Activated T-helper 1 cell treated with anti-CD3 and anti-CD28 coated beads, Interleukin-12 subunit alpha, Interleukin-12 subunit beta, Interleukin-2, Interleukin-4 antibody, amounts not matched to agents 30 ng/mL and 10 ng/mL and 1 ng/mL, durations not matched to agents 14 hours and 24 hours and 36 hours (primary cell): ENCODE measurements at regions of chr1 and their contacts with region 1.

Region 1: DNA sequence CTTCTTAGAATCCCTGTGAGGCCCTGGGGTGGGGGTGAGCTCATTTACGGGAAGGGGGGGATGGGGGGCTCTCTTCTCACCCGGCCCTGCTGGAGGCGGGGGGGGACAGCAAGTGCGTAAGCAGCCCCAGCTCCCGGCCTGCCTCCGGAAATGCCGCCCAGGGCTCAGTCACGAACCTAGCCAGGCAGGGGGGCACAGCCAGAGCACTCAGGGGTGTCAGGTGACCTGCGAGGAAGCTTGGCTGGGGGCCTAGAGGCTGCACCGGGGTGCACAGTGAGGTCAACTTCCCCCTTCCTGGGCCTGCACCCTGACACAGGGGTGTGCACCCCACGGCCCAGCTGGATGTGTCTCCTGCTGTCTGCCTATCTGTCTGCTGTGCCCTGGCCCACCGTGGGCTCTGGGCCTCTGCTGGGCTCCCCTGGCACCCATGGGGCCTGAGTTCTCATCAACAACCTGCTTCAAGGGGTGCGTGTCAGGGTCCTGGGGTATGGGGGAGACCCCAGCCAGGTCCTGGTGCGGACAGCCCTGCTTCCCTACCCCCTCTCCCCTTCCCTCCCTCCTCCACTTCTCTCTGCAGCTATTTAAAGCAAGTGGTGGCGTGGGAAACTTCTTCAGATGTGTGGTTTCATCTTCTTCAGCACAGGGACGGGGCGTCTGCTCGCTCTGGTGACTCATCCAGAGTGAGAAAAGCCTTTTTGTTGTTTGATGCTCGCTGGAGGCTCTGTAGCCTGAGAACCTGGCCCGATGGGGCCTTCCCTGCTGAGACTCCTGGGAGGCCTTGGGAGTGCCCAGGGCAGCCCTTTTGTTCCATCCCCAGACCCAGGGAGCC is 92.5 kb upstream of the RUNX3 start:
- DNase-seq: peak; percentile 88
- H3K4me3 Mint-ChIP-seq: peak overlapping the region; percentile 74
- H3K27ac Mint-ChIP-seq: peak overlapping the region; percentile 97
- H3K4me1 Mint-ChIP-seq: peaks cover 93% of the 10 kb centered on the region
- H3K27me3 Mint-ChIP-seq: no peaks in the 10 kb centered on the region

Region 2: GRCh38 chr1:24987875-24988557 is 34.6 kb before region 1 on chr1:
- intact Hi-C with region 1: loop called (anchors 1 kb)
- DNase-seq: no peak
- H3K4me3 Mint-ChIP-seq: no peak overlapping the region
- H3K27ac Mint-ChIP-seq: no peak overlapping the region
- H3K4me1 Mint-ChIP-seq: peaks cover 97% of the 10 kb centered on the region
- H3K27me3 Mint-ChIP-seq: no peaks in the 10 kb centered on the region

Region 3: DNA sequence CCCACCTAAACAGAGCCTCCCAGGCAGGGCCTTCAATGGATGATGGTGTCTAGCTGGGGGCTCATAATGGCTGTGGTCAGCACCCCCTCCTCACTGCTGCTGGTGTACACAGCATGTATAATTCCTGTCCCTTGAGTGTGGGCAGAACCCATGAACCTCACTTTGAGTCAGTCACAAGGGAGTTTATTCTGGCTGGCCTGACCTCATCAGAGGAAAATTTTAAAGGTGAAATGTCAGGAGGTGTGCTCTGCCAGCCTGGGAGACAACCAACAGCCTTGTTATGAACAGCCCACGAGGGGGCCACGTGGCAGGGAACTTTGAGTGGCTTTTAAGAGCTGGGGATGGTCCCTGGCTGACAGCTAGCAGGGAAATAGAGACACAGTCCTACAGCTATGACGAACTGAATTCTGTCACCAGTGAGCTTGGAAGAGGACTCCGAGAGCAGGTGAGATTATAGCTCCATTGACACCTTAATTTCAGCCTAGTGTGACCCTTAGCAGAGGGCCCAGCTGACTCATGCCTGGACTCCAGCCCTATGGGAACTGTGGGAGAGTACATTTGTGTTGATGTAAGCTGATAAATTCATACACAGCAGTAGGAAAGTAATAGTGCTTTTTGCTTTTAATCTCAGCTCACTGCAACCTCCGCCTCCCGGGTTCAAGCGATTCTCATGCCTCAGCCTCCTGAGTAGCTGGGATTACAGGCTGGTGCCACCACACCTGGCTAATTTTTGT is 19.0 kb before region 1 on chr1:
- intact Hi-C with region 1: loop called (anchors 1 kb)
- DNase-seq: no peak
- H3K4me3 Mint-ChIP-seq: peak overlapping the region; percentile 50
- H3K27ac Mint-ChIP-seq: peak overlapping the region; percentile 89
- H3K4me1 Mint-ChIP-seq: peaks cover 79% of the 10 kb centered on the region
- H3K27me3 Mint-ChIP-seq: no peaks in the 10 kb centered on the region

Region 4: GRCh38 chr1:25037174-25038074 is 14.8 kb after region 1 on chr1:
- intact Hi-C with region 1: loop called (anchors 2 kb)
- DNase-seq: peak; percentile 50
- H3K4me3 Mint-ChIP-seq: no peak overlapping the region
- H3K27ac Mint-ChIP-seq: peak overlapping the region; percentile 4
- H3K4me1 Mint-ChIP-seq: peaks cover 32% of the 10 kb centered on the region
- H3K27me3 Mint-ChIP-seq: peaks cover 7% of the 10 kb centered on the region